ENCODE measurements at regions of chr20 and their contacts with region 1.

Region 1: GRCh38 chr20:2697768-2698167 is 5.2 kb downstream of the EBF4 start:
- DNase-seq: peak in 1 of 2 experiments; percentile 39
- H3K4me3 ChIP-seq: no peak overlapping the region
- H3K27ac ChIP-seq: no peak overlapping the region
- H3K4me1 ChIP-seq: peaks cover 0 to 32% (median 24%) of the 10 kb centered on the region in 4 experiments; a peak in 6 of 7 replicates
- H3K27me3 ChIP-seq: peaks cover 24 to 73% (median 60%) of the 10 kb centered on the region in 4 experiments
- CTCF ChIP-seq: no peak
- EP300 ChIP-seq: no peak
- POLR2A ChIP-seq: no peak
- RAD21 ChIP-seq: no peak

Region 2: DNA sequence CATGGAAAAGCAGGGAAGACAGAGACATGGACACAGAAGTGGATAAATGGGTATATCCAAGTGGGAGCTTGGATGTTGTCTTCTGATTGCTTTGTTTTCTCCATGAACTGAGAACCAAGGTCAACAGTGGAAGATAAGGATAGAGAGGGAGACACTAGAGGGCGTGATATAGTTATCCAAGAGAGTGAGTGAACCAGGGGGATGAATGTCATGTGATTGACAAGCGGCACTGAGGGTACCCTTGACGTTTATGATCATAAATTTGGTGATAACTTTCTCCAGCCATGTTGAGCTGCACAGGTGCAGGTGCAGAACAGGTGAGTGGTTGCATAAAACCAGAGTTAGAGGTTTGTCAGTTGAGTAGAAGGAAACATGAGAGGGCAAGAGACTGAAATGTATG is 15.5 kb after region 1 on chr20:
- CTCF ChIA-PET with region 1: interaction called, 29 read pairs
- POLR2A ChIA-PET with region 1: interaction called, 5 read pairs
- DNase-seq: no peak
- H3K4me3 ChIP-seq: no peak overlapping the region
- H3K27ac ChIP-seq: no peak overlapping the region
- H3K4me1 ChIP-seq: peaks cover 2 to 14% (median 5%) of the 10 kb centered on the region in 4 experiments; a peak in 5 of 7 replicates
- H3K27me3 ChIP-seq: peaks cover 0 to 2% (median 0%) of the 10 kb centered on the region in 4 experiments; a peak in 1 of 7 replicates
- CTCF ChIP-seq: peak in 2 of 3 experiments; percentile 48 to 64; a peak in 2 of 4 replicates
- EP300 ChIP-seq: no peak
- POLR2A ChIP-seq: no peak
- RAD21 ChIP-seq: peak; percentile 62 to 70

Measured in H1 (cell line).